Activated CD4-positive, alpha-beta T cell treated with anti-CD3 and anti-CD28 coated beads for 36 hours (primary cell): ENCODE measurements at regions of chr7 and their contacts with region 1.

Region 1: DNA sequence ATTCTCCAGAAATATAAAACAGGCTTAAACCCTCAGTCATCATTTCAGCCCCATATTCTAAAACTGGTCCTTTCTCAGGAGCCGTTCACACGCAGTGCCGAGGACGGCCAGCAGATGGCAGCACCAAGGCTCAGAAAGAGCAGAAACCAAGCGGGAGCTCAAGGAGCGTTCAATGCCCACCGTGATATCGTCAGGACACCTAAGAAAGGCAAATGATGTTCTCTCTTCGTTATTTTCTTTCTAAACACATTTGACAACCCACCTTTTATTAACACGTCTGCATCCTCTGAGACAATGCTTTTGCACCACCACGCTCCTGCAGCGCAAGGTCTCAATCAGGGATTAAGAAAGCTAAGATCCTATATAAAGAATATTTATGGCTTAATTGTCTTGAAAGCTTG is 45.7 kb upstream of the RBM33 start:
- DNase-seq: peak; percentile 91
- ATAC-seq: peak; percentile 78
- H3K4me3 Mint-ChIP-seq: no peak overlapping the region
- H3K27ac Mint-ChIP-seq: no peak overlapping the region
- H3K4me1 Mint-ChIP-seq: peaks cover 9% of the 10 kb centered on the region
- H3K27me3 Mint-ChIP-seq: peaks cover 27% of the 10 kb centered on the region

Region 2: DNA sequence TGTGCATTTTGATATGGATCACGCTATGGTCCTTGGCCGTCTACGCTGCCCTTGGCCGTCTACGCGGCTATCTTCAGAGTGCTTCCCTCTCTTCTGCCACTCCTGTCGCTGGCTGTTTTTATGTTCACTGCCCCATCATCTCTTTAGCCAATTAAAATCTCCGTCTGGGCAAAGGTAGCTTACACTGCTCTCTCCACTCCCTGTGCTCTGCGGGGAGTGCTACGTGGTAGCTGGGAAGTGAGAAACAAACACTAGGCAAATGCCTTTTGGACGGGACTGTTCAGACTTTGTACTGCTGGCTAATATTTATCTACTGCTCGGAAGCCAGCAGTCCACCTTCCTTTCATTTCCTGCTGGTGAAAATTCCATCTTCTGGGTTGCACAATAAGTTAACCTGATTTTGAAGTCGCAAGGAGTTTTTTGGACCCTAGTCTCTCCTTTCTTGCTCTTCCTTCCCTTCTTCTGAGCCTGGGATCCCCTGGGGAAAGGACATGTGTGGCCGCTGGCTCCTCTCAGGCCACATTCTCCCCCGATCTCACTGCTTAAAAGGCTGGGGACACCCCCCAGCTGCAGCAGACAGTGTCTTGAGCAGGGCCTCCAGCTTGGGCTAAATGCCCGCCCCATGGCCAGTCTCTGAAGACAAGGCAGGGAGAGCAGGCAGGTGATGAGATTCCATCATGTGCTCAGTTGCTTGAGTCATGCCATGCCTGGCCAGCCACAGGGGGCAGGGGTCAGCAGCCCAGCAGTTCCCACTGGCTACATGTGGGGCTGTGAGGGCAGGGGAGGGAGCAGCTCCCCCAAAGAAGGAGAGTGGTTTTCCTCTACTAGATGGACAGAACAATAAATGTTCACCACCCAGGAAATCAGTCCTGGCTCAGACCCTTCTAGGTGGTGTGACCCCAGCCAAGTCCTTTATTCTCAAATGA is 20.2 kb after region 1 on chr7:
- CTCF ChIA-PET with region 1: interaction called, 11 read pairs
- POLR2A ChIA-PET with region 1: no interaction called
- intact Hi-C with region 1: no loop called
- DNase-seq: no peak
- ATAC-seq: no peak
- H3K4me3 Mint-ChIP-seq: no peak overlapping the region
- H3K27ac Mint-ChIP-seq: no peak overlapping the region
- H3K4me1 Mint-ChIP-seq: no peaks in the 10 kb centered on the region
- H3K27me3 Mint-ChIP-seq: peaks cover 3% of the 10 kb centered on the region

Region 3: DNA sequence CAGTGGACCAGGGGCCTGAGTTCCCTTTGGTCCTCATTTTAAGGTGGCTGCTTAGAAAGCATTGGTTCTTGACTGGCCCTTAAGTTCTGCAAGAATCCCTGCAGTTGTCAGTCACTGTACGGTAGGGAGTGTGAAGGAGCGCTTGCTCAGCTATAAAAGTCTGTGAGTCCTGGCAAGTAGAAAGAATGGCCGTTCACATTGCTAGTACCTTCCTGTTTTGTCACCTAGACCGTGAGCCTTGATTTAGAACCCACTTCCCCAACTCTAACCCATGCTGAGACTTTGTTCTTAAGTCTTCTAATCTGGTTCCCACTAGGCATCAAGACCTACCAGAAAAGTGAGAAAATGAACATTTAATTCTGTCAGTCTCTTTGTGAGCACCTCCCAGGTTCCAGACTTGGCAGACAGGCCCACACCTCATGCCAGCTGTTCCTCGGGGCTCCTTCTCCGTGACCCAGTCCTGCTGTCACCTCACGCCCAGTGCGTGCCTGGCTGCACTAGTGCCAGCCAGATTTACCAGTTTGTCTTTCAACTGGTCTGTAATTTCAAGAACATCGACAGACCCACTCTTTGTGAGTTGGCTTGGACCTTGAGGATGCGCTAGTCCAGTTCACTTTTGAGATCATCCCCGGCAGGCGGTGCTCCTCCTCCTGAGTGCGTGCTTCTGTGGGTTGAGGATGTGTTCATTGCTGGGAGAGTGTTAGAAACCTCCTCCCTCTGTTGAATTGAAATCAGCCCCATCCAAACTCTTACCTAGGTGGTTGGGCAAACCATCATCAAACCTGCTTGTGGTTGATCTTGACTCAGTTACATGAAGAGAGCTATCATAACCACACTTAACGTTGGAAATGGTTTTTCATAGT is 135.0 kb after region 1 on chr7:
- CTCF ChIA-PET with region 1: interaction called, 52 read pairs
- POLR2A ChIA-PET with region 1: no interaction called
- intact Hi-C with region 1: loop called (anchors 1 kb)
- DNase-seq: peak; percentile 62
- ATAC-seq: peak; percentile 82
- H3K4me3 Mint-ChIP-seq: no peak overlapping the region
- H3K27ac Mint-ChIP-seq: peak overlapping the region; percentile 79
- H3K4me1 Mint-ChIP-seq: peaks cover 70% of the 10 kb centered on the region
- H3K27me3 Mint-ChIP-seq: no peaks in the 10 kb centered on the region

Region 4: DNA sequence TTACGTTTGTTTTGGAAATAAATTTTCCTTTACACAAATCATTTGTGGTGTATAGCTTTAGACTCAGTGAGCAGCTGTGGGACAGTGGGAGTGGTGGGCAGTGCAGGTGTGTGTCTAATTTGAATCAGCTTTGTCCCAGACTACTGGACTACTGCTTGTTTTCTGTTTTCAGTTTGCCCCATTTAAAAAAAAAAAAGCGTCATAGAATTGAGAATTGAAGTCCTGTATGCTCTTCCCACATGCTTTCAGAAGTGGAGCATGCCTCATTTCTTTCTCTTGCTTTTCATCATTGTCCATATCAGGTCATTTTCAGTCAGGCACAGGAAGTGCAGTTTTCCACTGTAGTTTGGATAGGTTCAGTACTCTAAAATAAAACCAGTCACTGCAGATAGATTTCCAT is 147.4 kb after region 1 on chr7:
- CTCF ChIA-PET with region 1: interaction called, 14 read pairs
- POLR2A ChIA-PET with region 1: no interaction called
- intact Hi-C with region 1: no loop called
- DNase-seq: no peak
- ATAC-seq: peak; percentile 75
- H3K4me3 Mint-ChIP-seq: no peak overlapping the region
- H3K27ac Mint-ChIP-seq: peak overlapping the region; percentile 62
- H3K4me1 Mint-ChIP-seq: peaks cover 59% of the 10 kb centered on the region
- H3K27me3 Mint-ChIP-seq: no peaks in the 10 kb centered on the region

Region 5: DNA sequence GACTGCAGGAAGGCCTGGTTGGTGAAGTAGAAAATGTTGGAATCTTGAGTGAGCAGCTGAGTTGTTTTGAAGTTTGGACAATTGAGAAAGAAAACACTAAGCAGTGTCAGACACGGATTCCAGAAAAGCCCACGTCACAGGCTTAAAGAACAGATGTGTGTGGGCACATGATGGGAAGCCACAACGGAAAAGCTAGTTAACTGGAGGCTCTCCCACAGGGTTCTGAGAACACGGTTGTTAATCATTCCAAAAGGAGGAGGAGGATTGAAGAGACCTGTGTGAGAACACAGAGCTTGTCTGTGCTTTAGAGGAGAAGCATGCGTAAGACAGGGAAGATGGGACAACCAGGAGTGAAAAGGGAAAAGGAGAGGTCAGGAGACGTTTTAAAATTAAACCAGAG is 170.9 kb after region 1 on chr7:
- CTCF ChIA-PET with region 1: interaction called, 101 read pairs
- POLR2A ChIA-PET with region 1: no interaction called
- intact Hi-C with region 1: loop called (anchors 1 kb)
- DNase-seq: no peak
- ATAC-seq: no peak
- H3K4me3 Mint-ChIP-seq: no peak overlapping the region
- H3K27ac Mint-ChIP-seq: no peak overlapping the region
- H3K4me1 Mint-ChIP-seq: peaks cover 15% of the 10 kb centered on the region
- H3K27me3 Mint-ChIP-seq: no peaks in the 10 kb centered on the region